ENCODE measurements at regions of chr1 and their contacts with region 1.

Region 1: DNA sequence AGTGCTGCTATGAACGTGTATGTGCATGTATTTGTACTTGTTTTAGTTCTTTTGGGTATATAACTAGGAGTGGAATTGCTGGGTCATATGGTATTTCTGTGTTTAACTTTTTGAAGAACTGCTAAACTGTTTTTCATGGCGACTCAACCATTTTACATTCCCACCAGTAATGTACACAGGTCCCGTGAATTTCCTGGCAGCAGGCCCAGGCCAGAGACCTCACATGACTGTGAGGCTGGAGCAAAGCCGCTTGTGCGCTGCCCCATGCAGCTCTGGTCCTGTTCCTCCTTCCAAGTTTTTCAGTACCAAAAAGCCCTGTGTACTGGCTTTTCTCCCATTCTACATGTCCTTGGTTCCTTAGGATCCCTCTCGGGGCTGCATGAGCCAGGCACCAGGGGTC is 29.6 kb downstream of the ACOT11 start:
- DNase-seq: no peak
- H3K4me3 ChIP-seq: no peak overlapping the region
- H3K4me3 Mint-ChIP-seq: no peak overlapping the region
- H3K27ac Mint-ChIP-seq: no peak overlapping the region
- H3K4me1 ChIP-seq: no peaks in the 10 kb centered on the region
- H3K4me1 Mint-ChIP-seq: peaks cover 6% of the 10 kb centered on the region
- H3K27me3 ChIP-seq: no peaks in the 10 kb centered on the region
- H3K27me3 Mint-ChIP-seq: no peaks in the 10 kb centered on the region
- CTCF ChIP-seq: no peak

Region 2: GRCh38 chr1:54645806-54646676 is 68.4 kb after region 1 on chr1:
- CTCF ChIA-PET with region 1: no interaction called
- POLR2A ChIA-PET with region 1: no interaction called
- intact Hi-C with region 1: loop called (anchors 10 kb)
- DNase-seq: no peak
- H3K4me3 ChIP-seq: no peak overlapping the region
- H3K4me3 Mint-ChIP-seq: no peak overlapping the region
- H3K27ac Mint-ChIP-seq: no peak overlapping the region
- H3K4me1 ChIP-seq: peaks cover 37% of the 10 kb centered on the region
- H3K4me1 Mint-ChIP-seq: peaks cover 27% of the 10 kb centered on the region
- H3K27me3 ChIP-seq: no peaks in the 10 kb centered on the region
- H3K27me3 Mint-ChIP-seq: no peaks in the 10 kb centered on the region
- CTCF ChIP-seq: no peak